ENCODE measurements at regions of chr1 and their contacts with region 1.

Region 1: DNA sequence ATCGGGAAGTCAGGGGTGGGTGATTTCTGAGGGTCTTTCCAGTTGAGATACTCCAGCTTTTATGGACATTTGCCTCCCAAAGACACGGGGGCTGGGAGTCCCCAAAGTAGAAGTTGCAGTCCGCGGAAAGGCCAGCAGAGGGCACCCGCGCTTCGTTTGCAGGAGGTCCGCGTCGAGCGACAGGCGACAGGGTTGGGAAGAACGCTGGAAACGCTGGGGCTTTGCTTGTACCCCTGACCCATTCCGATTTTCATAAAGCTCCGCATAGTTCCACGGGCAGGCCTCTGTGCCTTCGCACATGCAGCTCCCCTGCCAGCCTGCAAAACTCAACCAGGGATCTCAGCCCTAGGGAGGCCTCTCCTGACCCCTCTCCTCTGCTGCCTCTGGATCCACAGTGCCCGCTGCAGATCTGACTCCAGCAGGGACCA is 44.2 kb upstream of the LAPTM5 start:
- DNase-seq: peak; percentile 79

Region 2: DNA sequence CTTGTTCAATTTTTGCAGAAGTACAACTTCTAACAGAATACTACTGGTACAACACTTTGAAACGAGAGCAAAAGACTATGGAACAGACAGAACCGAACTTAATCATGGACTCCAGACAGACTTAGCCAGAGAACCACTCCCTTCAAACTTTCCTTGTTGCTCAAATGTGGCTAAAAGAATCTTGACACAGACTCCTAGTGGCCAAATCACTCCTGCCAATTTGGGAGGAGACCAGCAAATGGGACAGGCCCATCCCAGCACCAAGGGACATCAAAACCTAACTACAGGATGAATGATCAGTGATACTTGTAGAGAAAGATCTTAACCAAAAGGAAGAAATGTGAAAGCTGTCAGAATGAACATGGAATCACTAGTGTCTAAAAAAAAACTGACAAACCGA is 232.4 kb before region 1 on chr1:
- in situ Hi-C with region 1: no loop called
- DNase-seq: no peak

Region 3: GRCh38 chr1:30911046-30911954 is 109.5 kb after region 1 on chr1:
- in situ Hi-C with region 1: loop called (anchors 5 kb)
- DNase-seq: peak; percentile 76